Naive thymus-derived CD4-positive, alpha-beta T cell (primary cell): ENCODE measurements at regions of chr2 and their contacts with region 1.

Region 1: DNA sequence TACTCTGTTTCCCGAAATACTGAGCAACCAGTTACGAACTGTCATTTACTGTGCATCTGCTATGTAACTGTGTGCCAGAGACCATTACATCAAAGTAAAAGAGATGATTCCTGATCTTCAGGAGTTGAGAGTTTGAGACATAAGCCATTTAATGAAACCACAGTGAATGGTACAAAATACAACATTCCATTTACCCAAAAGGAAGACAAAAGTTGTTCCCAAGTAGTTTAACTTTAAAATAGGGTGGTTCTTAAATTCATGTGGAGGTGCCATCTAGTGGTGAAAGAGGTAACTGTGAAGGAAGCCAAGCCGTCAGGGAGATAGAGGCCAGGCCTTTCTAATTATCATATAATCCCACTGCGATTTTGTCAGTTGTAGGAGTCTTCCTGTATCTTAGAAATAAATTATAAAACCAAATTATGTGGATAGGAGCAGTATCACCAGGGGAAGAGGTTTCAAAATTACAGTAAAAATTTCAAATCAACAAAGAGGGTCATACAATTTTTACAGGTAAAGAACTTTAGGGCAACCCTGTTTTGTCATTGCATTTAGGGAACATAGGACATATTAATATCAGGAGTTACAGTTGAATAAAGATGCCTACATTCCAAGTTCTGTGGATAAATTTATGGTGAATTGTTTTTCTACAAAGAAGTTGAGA is 67.7 kb downstream of the EPAS1 start:
- DNase-seq: peak in 6 of 9 donors; percentile 20 to 64 (median 56)
- ATAC-seq: peak; percentile 52
- H3K4me3 ChIP-seq: no peak overlapping the region
- H3K4me3 Mint-ChIP-seq: peak overlapping the region in 1 of 10 donors; percentile 18
- H3K27ac ChIP-seq: no peak overlapping the region
- H3K27ac Mint-ChIP-seq: peak overlapping the region in 1 of 9 donors; percentile 10
- H3K4me1 ChIP-seq: peaks cover 7 to 29% of the 10 kb centered on the region in 2 donors
- H3K4me1 Mint-ChIP-seq: peaks cover 20 to 46% (median 41%) of the 10 kb centered on the region in 7 donors
- H3K27me3 ChIP-seq: no peaks in the 10 kb centered on the region
- H3K27me3 Mint-ChIP-seq: peaks cover 0 to 5% (median 0%) of the 10 kb centered on the region in 5 donors

Region 2: DNA sequence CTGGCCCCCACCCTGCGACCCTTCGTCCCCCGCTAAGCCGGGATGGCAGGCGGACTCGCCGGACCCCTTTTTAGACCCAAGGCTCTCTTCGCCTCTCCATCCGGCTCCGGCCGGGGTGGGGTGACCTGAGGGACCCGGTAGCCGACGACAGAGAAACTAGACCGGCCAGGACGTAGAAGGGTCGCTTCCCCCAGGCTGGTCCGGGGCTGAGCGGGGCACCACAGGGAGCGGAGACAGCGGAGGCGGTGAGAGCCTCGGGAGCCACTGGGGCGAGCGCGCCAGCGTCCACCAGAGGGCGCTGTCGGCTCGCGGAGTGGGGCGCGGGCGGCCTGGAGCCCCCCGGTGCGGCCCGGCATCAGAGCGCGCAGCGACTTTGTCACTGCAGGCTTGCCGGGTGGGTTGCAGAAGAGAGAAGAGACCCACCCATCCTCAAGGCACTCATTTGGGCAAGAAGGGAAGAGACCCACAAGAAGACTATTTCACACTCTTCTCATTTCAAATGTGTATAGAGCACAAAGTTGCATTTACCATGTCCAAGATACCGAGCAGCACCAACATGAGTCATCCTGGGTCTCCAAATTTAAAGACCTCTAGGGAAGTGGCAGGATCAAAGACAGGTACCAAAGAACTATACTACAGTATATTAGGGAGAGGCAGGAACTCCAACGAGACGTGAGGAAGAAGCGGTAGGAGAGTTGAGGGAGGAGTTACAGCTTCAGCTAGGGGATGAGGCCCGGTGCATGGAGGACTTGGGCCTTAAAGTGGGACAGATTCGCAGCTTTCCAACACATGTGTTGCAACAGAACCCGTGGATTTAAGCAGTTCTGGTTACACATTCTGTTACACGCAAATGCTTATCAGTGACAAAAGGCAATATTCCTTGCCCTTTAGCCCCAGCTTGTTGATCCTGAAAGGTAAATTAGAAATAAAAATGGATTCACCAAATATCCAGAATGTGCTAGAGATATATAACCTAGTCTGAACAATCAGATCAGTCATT is 721.1 kb before region 1 on chr2:
- CTCF ChIA-PET with region 1: no interaction called
- POLR2A ChIA-PET with region 1: no interaction called
- intact Hi-C with region 1: loop called in 1 of 2 experiments (anchors 2 kb)
- DNase-seq: peak; percentile 46 to 86 (median 73)
- ATAC-seq: peak; percentile 99
- H3K4me3 ChIP-seq: peak overlapping the region; percentile 44
- H3K4me3 Mint-ChIP-seq: peak overlapping the region; percentile 16 to 67 (median 50)
- H3K27ac ChIP-seq: no peak overlapping the region
- H3K27ac Mint-ChIP-seq: peak overlapping the region in 2 of 9 donors; percentile 46 to 57
- H3K4me1 ChIP-seq: peaks cover 0 to 9% of the 10 kb centered on the region in 2 donors
- H3K4me1 Mint-ChIP-seq: peaks cover 0 to 18% (median 5%) of the 10 kb centered on the region in 7 donors
- H3K27me3 ChIP-seq: no peaks in the 10 kb centered on the region
- H3K27me3 Mint-ChIP-seq: peaks cover 11 to 37% (median 20%) of the 10 kb centered on the region in 5 donors

Region 3: GRCh38 chr2:46010925-46011490 is 353.9 kb before region 1 on chr2:
- CTCF ChIA-PET with region 1: interaction called, 4 read pairs
- POLR2A ChIA-PET with region 1: no interaction called
- intact Hi-C with region 1: loop called (anchors 1 kb)
- DNase-seq: peak in 6 of 9 donors; percentile 10 to 38 (median 26)
- ATAC-seq: no peak
- H3K4me3 ChIP-seq: no peak overlapping the region
- H3K4me3 Mint-ChIP-seq: no peak overlapping the region
- H3K27ac ChIP-seq: no peak overlapping the region
- H3K27ac Mint-ChIP-seq: no peak overlapping the region
- H3K4me1 ChIP-seq: no peaks in the 10 kb centered on the region
- H3K4me1 Mint-ChIP-seq: peaks cover 0 to 16% (median 0%) of the 10 kb centered on the region in 7 donors
- H3K27me3 ChIP-seq: no peaks in the 10 kb centered on the region
- H3K27me3 Mint-ChIP-seq: no peaks in the 10 kb centered on the region

Region 4: GRCh38 chr2:46179037-46179652 is 185.8 kb before region 1 on chr2:
- CTCF ChIA-PET with region 1: no interaction called
- POLR2A ChIA-PET with region 1: no interaction called
- intact Hi-C with region 1: loop called in 1 of 2 experiments (anchors 10 kb)
- DNase-seq: peak in 8 of 9 donors; percentile 34 to 79 (median 62)
- ATAC-seq: peak; percentile 90
- H3K4me3 ChIP-seq: no peak overlapping the region
- H3K4me3 Mint-ChIP-seq: peak overlapping the region in 4 of 10 donors; percentile 2 to 50 (median 32)
- H3K27ac ChIP-seq: no peak overlapping the region
- H3K27ac Mint-ChIP-seq: peak overlapping the region in 8 of 9 donors; percentile 28 to 86 (median 64)
- H3K4me1 ChIP-seq: peaks cover 0 to 8% of the 10 kb centered on the region in 2 donors
- H3K4me1 Mint-ChIP-seq: peaks cover 10 to 38% (median 12%) of the 10 kb centered on the region in 7 donors
- H3K27me3 ChIP-seq: no peaks in the 10 kb centered on the region
- H3K27me3 Mint-ChIP-seq: no peaks in the 10 kb centered on the region

Region 5: DNA sequence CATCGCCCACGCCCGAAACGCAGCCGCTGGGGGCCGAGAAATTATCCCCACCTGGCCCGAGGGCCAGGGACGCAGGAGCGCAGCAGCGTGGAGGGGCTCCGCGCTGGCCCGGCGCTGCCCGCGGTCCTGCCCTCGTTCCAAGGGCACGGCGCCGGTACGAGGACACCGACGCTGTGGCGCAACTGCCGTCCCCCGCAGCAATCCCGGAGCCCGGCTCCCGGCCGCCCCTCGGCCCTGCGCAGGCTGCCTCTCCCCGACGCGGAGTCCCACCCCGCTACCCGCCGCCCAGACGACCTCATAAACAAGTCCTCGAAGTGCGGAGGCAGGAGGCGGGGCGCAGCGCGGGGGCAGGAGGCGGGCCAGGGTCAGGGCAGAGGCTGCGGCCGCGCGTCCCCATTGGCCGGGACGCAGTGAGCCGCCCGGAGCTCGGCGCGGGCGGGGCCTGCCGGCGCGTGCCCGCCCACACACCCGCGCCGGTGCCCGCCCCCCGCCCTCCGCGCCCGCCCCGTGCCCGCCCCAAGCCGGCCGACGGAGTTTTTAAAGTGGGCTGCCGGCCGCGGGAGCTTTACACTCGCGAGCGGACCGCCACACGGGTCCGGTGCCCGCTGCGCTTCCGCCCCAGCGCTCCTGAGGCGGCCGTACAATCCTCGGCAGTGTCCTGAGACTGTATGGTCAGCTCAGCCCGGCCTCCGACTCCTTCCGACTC is 67.9 kb before region 1 on chr2 and contains the start of gene EPAS1:
- CTCF ChIA-PET with region 1: no interaction called
- POLR2A ChIA-PET with region 1: no interaction called
- intact Hi-C with region 1: loop called (anchors 1 kb)
- DNase-seq: peak; percentile 48 to 88 (median 54)
- ATAC-seq: peak; percentile 92
- H3K4me3 ChIP-seq: peak within 1 kb of the TSS; percentile 74
- H3K4me3 Mint-ChIP-seq: peak within 1 kb of the TSS; percentile 84 to 95 (median 92)
- H3K27ac ChIP-seq: no peak within 1 kb of the TSS
- H3K27ac Mint-ChIP-seq: peak within 1 kb of the TSS in 7 of 9 donors; percentile 34 to 89 (median 69)
- H3K4me1 ChIP-seq: peaks cover 18 to 26% of the 10 kb centered on the region in 2 donors
- H3K4me1 Mint-ChIP-seq: peaks cover 14 to 33% (median 26%) of the 10 kb centered on the region in 7 donors
- H3K27me3 ChIP-seq: peaks cover 13 to 18% of the 10 kb centered on the region in 2 donors
- H3K27me3 Mint-ChIP-seq: peaks cover 18 to 89% (median 48%) of the 10 kb centered on the region in 5 donors
- total RNA-seq, gene EPAS1: 1.6 to 17.0 (median 6.4) TPM

Region 6: DNA sequence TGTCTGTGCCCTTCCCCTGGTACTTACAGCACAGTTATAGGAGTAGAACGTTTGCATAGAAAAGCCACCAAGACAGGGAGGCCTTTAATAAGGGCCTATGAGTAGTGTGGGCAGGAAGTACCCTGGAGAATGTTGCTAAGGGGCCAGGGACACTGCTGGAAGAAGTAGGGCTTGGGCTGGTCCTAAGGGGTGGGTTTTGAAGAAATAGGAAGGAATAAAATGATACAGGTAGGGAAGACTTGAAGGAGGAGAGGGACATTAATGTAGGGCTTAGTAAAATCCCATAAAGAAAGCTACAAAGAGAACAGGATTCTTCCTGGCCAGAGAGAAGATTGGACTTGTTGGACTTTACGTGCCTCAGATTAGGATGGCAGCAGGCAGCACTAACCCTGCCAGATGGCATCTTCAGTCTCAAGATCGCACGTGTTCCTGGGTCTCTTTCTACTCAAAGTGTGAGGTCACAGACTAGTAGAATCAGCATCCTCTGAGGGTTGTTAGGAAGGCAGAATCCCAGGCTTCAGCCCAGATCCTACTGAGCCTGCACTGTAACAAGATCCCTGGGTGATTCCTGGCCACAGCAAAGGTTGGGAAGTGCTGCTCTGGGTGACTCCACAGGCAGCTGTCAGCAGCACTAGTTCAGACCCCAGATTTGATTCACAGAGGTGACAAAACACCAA is 28.5 kb before region 1 on chr2:
- CTCF ChIA-PET with region 1: interaction called, 19 read pairs
- POLR2A ChIA-PET with region 1: interaction called, 3 read pairs
- intact Hi-C with region 1: loop called in 1 of 2 experiments (anchors 1 kb)
- DNase-seq: no peak
- ATAC-seq: no peak
- H3K4me3 ChIP-seq: no peak overlapping the region
- H3K4me3 Mint-ChIP-seq: peak overlapping the region in 1 of 10 donors; percentile 31
- H3K27ac ChIP-seq: no peak overlapping the region
- H3K27ac Mint-ChIP-seq: no peak overlapping the region
- H3K4me1 ChIP-seq: peaks cover 0 to 10% of the 10 kb centered on the region in 2 donors
- H3K4me1 Mint-ChIP-seq: peaks cover 6 to 36% (median 29%) of the 10 kb centered on the region in 7 donors
- H3K27me3 ChIP-seq: no peaks in the 10 kb centered on the region
- H3K27me3 Mint-ChIP-seq: peaks cover 0 to 19% (median 7%) of the 10 kb centered on the region in 5 donors

Region 7: DNA sequence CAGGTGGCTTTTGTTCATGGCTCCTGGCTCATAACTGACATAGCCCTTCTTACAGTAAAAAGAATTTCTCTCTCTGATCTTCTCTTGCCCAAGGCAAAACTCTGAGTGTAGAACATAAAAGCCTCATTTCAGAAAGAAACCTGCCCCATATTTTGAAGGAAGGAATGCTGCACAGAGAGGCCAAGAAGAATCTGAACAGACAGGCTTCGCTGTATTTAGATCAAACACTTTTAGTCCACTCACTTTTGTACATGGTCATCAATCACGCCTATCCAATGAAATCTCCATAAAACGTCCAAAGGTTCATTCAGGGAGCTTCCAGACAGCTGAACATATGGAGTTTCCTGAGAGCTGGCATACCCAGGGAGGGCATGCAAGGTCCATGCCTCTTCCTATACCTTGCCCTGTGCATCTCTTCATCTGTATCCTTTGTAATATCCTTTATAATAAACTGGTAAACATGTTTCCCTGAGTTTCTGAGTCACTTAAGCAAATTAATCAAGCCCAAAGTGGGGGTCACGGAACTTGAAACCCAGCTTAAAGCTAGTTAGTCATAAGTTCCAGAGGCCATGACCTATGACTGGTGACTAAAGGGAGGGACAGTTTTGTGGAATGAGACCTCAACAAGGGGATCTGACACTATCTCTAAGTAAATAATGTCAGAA is 51.9 kb after region 1 on chr2:
- CTCF ChIA-PET with region 1: no interaction called
- POLR2A ChIA-PET with region 1: no interaction called
- intact Hi-C with region 1: no loop called
- DNase-seq: no peak
- ATAC-seq: no peak
- H3K4me3 ChIP-seq: no peak overlapping the region
- H3K4me3 Mint-ChIP-seq: no peak overlapping the region
- H3K27ac ChIP-seq: no peak overlapping the region
- H3K27ac Mint-ChIP-seq: no peak overlapping the region
- H3K4me1 ChIP-seq: no peaks in the 10 kb centered on the region
- H3K4me1 Mint-ChIP-seq: peaks cover 0 to 1% (median 0%) of the 10 kb centered on the region in 7 donors
- H3K27me3 ChIP-seq: no peaks in the 10 kb centered on the region
- H3K27me3 Mint-ChIP-seq: peaks cover 0 to 9% (median 5%) of the 10 kb centered on the region in 5 donors

Region 8: DNA sequence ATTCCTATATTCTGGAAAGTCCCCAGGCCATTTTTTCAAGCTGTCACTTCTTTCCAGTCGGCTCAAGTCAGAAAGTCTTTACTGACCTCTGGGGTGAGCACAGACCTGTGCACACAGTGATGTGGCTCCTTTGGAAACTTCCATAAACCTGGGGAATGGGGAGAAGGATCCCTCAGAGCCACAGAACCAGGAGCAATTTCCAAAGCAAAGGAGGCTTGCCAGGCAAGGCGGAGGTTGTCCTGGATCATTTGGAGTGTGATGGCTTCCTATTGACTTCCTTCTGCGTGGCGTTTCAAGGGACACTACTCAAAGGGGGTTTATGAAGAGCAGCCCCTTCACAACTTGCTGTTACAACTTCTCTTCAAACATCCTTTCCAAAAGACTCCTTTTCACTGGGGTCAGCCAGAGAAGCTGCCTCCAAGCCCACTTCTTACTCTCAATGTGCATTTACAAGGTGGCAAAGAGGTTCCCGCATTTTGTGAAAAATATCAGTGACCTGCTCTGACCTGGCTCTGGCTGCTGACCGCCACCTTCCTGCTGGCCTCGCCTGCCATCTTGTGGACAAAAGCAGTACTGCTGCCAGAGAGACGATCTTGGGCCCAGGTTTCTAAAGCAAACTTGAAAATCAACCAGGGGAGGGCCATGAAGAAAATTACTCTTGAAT is 96.2 kb after region 1 on chr2:
- CTCF ChIA-PET with region 1: interaction called, 4 read pairs
- POLR2A ChIA-PET with region 1: no interaction called
- intact Hi-C with region 1: loop called in 1 of 2 experiments (anchors 1 kb)
- DNase-seq: peak; percentile 29 to 80 (median 60)
- ATAC-seq: peak; percentile 74
- H3K4me3 ChIP-seq: no peak overlapping the region
- H3K4me3 Mint-ChIP-seq: no peak overlapping the region
- H3K27ac ChIP-seq: no peak overlapping the region
- H3K27ac Mint-ChIP-seq: peak overlapping the region in 1 of 9 donors; percentile 7
- H3K4me1 ChIP-seq: no peaks in the 10 kb centered on the region
- H3K4me1 Mint-ChIP-seq: peaks cover 0 to 12% (median 8%) of the 10 kb centered on the region in 7 donors
- H3K27me3 ChIP-seq: no peaks in the 10 kb centered on the region
- H3K27me3 Mint-ChIP-seq: peaks cover 0 to 5% (median 0%) of the 10 kb centered on the region in 5 donors